ENCODE measurements at regions of chr9 and their contacts with region 1.

Region 1: GRCh38 chr9:128117613-128118471 is 9.7 kb downstream of the PTGES2 start:
- DNase-seq: peak; percentile 90 to 97 (median 95)
- H3K4me3 ChIP-seq: no peak overlapping the region
- H3K27ac ChIP-seq: no peak overlapping the region
- H3K4me1 ChIP-seq: no peaks in the 10 kb centered on the region
- H3K27me3 ChIP-seq: no peaks in the 10 kb centered on the region
- CTCF ChIP-seq: peak; percentile 100
- POLR2A ChIP-seq: no peak

Region 2: GRCh38 chr9:128043467-128043868 is 74.4 kb before region 1 on chr9:
- intact Hi-C with region 1: loop called in 1 of 2 experiments (anchors 5 kb)
- DNase-seq: peak in 2 of 7 donors; percentile 57 to 61
- H3K4me3 ChIP-seq: no peak overlapping the region
- H3K27ac ChIP-seq: peak overlapping the region in 1 of 5 donors; percentile 30
- H3K4me1 ChIP-seq: peaks cover 0 to 15% of the 10 kb centered on the region in 2 donors
- H3K27me3 ChIP-seq: no peaks in the 10 kb centered on the region
- CTCF ChIP-seq: no peak
- POLR2A ChIP-seq: no peak

Measured in adrenal gland (tissue), 19 donors.